ENCODE measurements at regions of chr7 and their contacts with region 1.

Region 1: DNA sequence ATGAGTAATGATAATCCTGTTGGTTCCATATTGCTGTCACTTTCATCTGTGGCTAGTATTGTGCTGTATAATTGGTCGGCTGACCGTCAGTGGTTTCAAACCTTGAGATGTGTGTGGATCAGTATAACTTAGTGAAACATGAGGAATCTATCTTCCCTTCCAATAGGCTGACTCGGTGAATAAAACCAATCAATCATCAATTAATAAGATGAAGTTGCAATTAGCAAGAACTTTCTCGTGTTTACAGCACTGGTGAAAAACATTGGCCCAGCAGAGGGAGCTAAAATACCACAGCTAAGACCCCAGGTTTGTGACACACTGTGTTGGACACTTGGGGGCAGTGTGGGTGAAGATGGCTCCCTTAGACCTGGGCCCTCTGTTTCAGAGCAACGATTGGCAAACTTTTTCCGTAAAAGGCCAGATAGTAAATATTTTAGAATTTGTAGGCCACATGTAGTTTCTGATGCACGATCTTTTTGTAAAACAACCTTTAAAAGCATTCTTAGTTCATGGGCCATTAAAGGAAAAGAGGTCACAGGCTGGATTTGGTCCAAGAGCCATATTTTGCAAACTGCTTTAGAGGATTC is 47.8 kb downstream of the STRA8 start:
- DNase-seq: peak; percentile 51 to 89 (median 78)
- ATAC-seq: peak; percentile 100
- H3K4me3 ChIP-seq: no peak overlapping the region
- H3K4me3 Mint-ChIP-seq: no peak overlapping the region
- H3K27ac ChIP-seq: no peak overlapping the region
- H3K27ac Mint-ChIP-seq: no peak overlapping the region
- H3K4me1 ChIP-seq: no peaks in the 10 kb centered on the region
- H3K4me1 Mint-ChIP-seq: peaks cover 12% of the 10 kb centered on the region
- H3K27me3 ChIP-seq: no peaks in the 10 kb centered on the region
- H3K27me3 Mint-ChIP-seq: peaks cover 4% of the 10 kb centered on the region
- CTCF ChIP-seq: peak; percentile 98

Region 2: GRCh38 chr7:135188298-135188984 is 93.0 kb before region 1 on chr7:
- CTCF ChIA-PET with region 1: no interaction called
- POLR2A ChIA-PET with region 1: no interaction called
- intact Hi-C with region 1: no loop called
- DNase-seq: peak in 2 of 9 experiments; percentile 17 to 50
- ATAC-seq: peak; percentile 38
- H3K4me3 ChIP-seq: no peak overlapping the region
- H3K4me3 Mint-ChIP-seq: no peak overlapping the region
- H3K27ac ChIP-seq: no peak overlapping the region
- H3K27ac Mint-ChIP-seq: no peak overlapping the region
- H3K4me1 ChIP-seq: no peaks in the 10 kb centered on the region
- H3K4me1 Mint-ChIP-seq: no peaks in the 10 kb centered on the region
- H3K27me3 ChIP-seq: no peaks in the 10 kb centered on the region
- H3K27me3 Mint-ChIP-seq: no peaks in the 10 kb centered on the region
- CTCF ChIP-seq: no peak

Region 3: DNA sequence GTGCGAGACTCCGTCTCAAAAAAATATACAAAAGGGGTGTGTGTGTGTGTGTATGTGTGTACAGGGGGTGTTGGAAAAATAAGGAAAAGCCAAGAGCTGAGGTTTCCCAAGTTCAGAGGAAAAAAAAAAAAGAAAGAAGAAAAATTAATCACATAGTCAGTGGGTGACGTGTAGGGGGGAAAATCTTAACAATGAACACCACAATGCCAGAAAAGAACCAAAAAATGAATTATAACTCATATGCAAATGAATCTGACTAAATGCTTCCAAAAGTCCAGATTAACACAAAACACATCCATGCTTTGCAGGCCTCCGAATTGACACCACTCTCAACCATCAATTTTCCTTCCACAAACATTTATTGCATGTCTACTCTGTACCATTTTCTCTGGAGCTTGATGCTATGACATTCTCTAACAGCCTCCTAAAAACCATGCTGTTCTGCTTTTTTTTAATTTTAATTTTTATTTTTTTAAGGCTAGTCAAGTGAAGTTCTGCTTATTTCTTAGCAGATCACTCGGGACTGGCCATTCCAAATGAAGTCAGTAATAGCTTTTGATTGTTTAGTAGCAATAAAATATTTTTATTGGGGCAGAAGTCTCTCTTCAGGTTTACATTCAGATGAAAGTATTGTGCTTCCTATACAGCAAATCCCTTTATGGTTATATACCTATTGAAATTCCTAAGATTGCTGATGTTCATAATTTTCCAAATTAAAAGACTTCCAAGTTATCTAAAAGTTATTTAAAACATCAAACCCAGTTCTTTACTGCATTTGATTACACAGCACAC is 94.6 kb after region 1 on chr7:
- CTCF ChIA-PET with region 1: no interaction called
- POLR2A ChIA-PET with region 1: no interaction called
- intact Hi-C with region 1: loop called in 1 of 2 experiments (anchors 10 kb)
- DNase-seq: no peak
- ATAC-seq: no peak
- H3K4me3 ChIP-seq: no peak overlapping the region
- H3K4me3 Mint-ChIP-seq: no peak overlapping the region
- H3K27ac ChIP-seq: no peak overlapping the region
- H3K27ac Mint-ChIP-seq: no peak overlapping the region
- H3K4me1 ChIP-seq: no peaks in the 10 kb centered on the region
- H3K4me1 Mint-ChIP-seq: peaks cover 7% of the 10 kb centered on the region
- H3K27me3 ChIP-seq: no peaks in the 10 kb centered on the region
- H3K27me3 Mint-ChIP-seq: no peaks in the 10 kb centered on the region
- CTCF ChIP-seq: no peak

Region 4: GRCh38 chr7:135389971-135390370 is 108.5 kb after region 1 on chr7:
- CTCF ChIA-PET with region 1: no interaction called
- POLR2A ChIA-PET with region 1: no interaction called
- intact Hi-C with region 1: no loop called
- DNase-seq: no peak
- ATAC-seq: no peak
- H3K4me3 ChIP-seq: no peak overlapping the region
- H3K4me3 Mint-ChIP-seq: no peak overlapping the region
- H3K27ac ChIP-seq: no peak overlapping the region
- H3K27ac Mint-ChIP-seq: no peak overlapping the region
- H3K4me1 ChIP-seq: no peaks in the 10 kb centered on the region
- H3K4me1 Mint-ChIP-seq: peaks cover 2% of the 10 kb centered on the region
- H3K27me3 ChIP-seq: no peaks in the 10 kb centered on the region
- H3K27me3 Mint-ChIP-seq: no peaks in the 10 kb centered on the region
- CTCF ChIP-seq: no peak

Region 5: GRCh38 chr7:135509903-135510602 is 228.6 kb after region 1 on chr7 and contains the start of gene CNOT4:
- CTCF ChIA-PET with region 1: interaction called, 3 read pairs
- POLR2A ChIA-PET with region 1: no interaction called
- intact Hi-C with region 1: loop called (anchors 1 to 5 kb)
- DNase-seq: peak; percentile 94 to 98 (median 97)
- ATAC-seq: peak; percentile 94
- H3K4me3 ChIP-seq: peak within 1 kb of the TSS; percentile 80 to 84
- H3K4me3 Mint-ChIP-seq: no peak within 1 kb of the TSS
- H3K27ac ChIP-seq: peak within 1 kb of the TSS; percentile 78 to 95
- H3K27ac Mint-ChIP-seq: no peak within 1 kb of the TSS
- H3K4me1 ChIP-seq: peaks cover 26% of the 10 kb centered on the region
- H3K4me1 Mint-ChIP-seq: peaks cover 14% of the 10 kb centered on the region
- H3K27me3 ChIP-seq: no peaks in the 10 kb centered on the region
- H3K27me3 Mint-ChIP-seq: no peaks in the 10 kb centered on the region
- CTCF ChIP-seq: no peak
- total RNA-seq, gene CNOT4: 24.8 to 25.9 TPM

Region 6: DNA sequence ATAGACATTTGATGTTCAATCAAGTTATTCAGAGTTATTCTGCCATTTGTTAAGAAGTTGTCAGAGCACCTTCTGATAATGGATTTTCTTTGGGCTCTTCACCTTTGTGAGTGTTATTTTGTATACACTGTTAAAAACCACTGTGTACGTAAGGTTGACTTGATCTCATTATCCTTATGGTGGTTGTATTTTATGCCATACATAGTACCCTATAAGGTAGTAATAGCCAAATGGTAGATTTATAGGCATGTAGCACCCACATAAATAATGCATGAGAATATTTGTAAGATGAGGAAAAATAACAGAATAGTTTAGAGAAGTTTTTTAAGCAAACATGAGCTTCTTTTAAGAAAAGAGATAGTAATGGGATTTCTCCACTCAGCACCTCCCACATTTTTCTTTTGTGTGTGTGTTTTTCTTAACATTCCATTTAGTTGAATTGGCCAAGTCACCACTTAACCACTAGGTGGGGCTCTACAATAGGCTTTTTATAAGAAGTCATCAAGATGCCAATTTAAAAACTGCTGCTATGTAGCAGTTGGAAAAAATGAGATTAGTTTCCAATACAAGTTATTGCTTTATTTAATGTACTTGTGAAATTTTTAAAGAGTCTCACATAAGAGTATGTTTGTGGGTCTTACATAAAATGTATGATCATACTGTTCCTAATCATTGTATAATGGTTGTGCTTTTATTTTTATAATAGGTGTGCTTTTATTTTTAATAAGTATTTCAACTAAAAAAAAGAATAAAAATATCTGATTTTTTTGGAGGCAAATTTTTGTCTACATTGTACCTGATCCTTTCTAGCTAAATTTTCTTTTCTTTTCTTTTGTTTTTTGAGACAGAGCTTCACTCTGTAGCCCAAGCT is 339.8 kb after region 1 on chr7:
- CTCF ChIA-PET with region 1: interaction called, 10 read pairs
- POLR2A ChIA-PET with region 1: no interaction called
- intact Hi-C with region 1: no loop called
- DNase-seq: peak in 3 of 9 experiments; percentile 17 to 61 (median 52)
- ATAC-seq: peak; percentile 42
- H3K4me3 ChIP-seq: no peak overlapping the region
- H3K4me3 Mint-ChIP-seq: no peak overlapping the region
- H3K27ac ChIP-seq: no peak overlapping the region
- H3K27ac Mint-ChIP-seq: no peak overlapping the region
- H3K4me1 ChIP-seq: no peaks in the 10 kb centered on the region
- H3K4me1 Mint-ChIP-seq: no peaks in the 10 kb centered on the region
- H3K27me3 ChIP-seq: no peaks in the 10 kb centered on the region
- H3K27me3 Mint-ChIP-seq: no peaks in the 10 kb centered on the region
- CTCF ChIP-seq: peak; percentile 95